ENCODE measurements at regions of chr19 and their contacts with region 1.

Region 1: DNA sequence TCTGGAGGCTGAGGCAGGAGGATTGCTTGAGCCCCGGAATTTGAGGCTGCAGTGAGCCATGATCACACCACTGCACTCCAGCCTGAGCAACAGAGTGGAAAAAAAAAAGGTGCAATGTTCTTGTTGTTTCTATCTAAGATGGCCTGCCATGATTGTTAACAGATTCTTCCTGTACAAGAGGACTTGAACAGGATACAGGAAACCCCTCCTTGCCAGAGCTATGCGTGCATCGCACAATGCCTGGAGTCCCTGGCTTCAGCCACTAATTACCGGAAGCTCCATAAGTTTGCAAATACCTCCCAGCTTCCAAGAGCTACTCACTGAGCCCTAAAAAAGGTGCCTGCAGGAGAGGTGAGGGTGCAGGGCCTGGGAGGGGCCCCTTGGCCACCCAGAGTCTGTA is 13.1 kb upstream of the HIF3A start:
- DNase-seq: no peak
- ATAC-seq: no peak

Region 2: DNA sequence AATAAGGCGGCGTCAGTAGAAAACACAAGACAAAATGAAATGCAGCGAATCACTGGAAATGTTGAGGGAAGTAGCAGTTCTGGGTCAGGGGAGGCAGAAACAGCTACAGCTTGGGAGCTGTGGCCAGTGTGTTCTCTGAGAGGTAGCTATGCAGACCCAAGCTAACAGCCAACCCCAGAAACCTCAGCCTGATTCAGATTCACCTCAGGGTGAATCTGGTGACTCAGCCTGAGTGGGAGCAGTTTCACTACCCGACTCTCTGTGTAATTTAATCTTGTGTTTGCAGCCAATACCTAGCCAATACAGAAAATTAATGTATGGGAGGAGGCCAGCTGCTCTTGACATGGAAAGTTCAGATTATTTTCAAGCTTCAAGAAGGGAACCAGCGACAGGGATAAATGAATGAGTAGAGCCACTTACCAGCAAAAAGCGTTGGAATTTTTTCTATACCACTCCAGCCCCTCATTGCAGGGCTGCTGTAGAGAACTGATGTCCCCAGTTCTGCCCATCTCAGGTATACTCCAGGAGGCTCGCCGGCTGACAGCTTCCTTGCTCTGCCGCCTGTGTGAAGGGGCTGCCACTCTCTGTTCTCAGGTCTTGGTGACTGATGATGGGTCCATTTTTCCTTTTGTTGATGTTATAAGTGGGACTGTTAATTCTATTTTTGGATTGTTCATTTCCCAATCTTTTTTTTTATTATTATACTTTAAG is 168.2 kb before region 1 on chr19:
- intact Hi-C with region 1: no loop called
- DNase-seq: no peak
- ATAC-seq: no peak

Region 3: GRCh38 chr19:46271481-46272197 is 12.1 kb before region 1 on chr19:
- intact Hi-C with region 1: no loop called
- DNase-seq: no peak
- ATAC-seq: no peak

Region 4: DNA sequence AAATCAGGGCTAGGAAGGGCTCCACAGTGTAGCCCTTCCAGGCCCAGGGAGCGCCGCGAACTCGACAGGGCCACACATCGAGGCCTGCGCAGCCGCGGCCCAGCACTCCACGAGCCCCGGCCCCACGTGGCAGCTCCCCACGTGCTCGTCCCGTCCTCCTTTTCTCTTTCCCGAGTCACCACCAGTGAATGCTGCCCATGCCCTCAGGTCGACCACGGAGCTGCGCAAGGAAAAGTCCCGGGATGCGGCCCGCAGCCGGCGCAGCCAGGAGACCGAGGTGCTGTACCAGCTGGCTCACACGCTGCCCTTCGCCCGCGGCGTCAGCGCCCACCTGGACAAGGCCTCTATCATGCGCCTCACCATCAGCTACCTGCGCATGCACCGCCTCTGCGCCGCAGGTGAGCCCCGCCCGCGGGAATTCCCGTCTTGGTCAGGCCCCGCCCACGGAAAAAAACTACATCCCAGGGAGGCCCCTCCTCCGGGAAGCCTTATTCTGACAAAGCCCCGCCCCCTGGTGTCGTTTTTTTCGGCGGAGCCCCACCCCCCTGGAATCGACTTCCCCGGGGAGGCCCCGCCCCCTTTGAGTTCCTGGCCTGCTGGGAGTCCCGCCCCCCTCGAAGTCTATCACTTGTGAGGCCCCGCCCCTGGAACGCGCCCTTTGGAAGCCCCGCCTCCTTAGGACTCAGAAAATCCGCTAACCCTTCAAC is 20.1 kb after region 1 on chr19:
- intact Hi-C with region 1: loop called (anchors 2 kb)
- DNase-seq: peak; percentile 76
- ATAC-seq: no peak

Region 5: DNA sequence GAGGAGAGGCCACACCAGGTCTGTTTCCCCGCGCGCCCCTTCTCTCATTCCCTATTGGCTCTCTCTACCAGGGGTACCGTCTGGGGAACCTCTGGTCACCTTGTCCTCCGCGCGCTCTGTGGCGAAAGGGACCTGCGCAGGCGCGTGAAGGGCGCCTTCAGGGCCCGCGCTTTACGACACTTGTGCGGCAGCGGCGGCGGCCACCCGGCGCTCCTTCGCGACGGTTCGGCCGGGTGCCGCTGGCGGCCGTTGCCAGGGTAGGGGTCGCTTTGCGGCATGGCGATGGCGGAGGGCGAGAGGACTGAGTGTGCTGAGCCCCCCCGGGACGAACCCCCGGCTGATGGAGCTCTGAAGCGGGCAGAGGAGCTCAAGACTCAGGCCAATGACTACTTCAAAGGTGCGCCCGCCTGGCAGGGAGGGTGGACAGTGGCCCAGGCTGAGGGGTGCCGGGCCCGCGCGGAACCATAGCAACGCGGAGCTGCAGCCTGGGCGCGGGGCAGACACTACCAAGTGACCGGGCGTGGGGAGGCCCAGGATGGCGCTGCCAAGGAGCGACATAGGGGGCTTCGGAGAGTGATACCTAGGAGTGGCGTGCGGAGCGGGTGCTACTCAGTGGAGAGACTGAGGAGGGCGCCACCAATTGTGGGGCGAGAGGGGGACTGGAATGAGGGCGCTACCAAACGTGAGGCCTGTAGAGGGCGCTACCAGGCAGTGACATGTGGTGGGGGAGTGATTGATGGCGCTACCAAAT is 63.2 kb after region 1 on chr19 and contains the start of gene PPP5C:
- intact Hi-C with region 1: loop called (anchors 5 kb)
- DNase-seq: peak; percentile 96
- ATAC-seq: peak; percentile 88
- total RNA-seq, gene PPP5C: 77.3 TPM

Region 6: GRCh38 chr19:46392243-46392801 is 108.6 kb after region 1 on chr19:
- intact Hi-C with region 1: loop called (anchors 5 kb)
- DNase-seq: peak; percentile 44
- ATAC-seq: no peak

Region 7: GRCh38 chr19:46487802-46488445 is 204.2 kb after region 1 on chr19:
- intact Hi-C with region 1: loop called (anchors 5 kb)
- DNase-seq: peak; percentile 88
- ATAC-seq: peak; percentile 79